ENCODE measurements at regions of chr11 and their contacts with region 1.

Region 1: GRCh38 chr11:113289431-113290187 is 24.8 kb upstream of the TTC12 start:
- DNase-seq: peak; percentile 83
- ATAC-seq: peak; percentile 98
- H3K4me3 Mint-ChIP-seq: no peak overlapping the region
- H3K27ac Mint-ChIP-seq: no peak overlapping the region
- H3K4me1 Mint-ChIP-seq: no peaks in the 10 kb centered on the region
- H3K27me3 Mint-ChIP-seq: peaks cover 7% of the 10 kb centered on the region

Region 2: DNA sequence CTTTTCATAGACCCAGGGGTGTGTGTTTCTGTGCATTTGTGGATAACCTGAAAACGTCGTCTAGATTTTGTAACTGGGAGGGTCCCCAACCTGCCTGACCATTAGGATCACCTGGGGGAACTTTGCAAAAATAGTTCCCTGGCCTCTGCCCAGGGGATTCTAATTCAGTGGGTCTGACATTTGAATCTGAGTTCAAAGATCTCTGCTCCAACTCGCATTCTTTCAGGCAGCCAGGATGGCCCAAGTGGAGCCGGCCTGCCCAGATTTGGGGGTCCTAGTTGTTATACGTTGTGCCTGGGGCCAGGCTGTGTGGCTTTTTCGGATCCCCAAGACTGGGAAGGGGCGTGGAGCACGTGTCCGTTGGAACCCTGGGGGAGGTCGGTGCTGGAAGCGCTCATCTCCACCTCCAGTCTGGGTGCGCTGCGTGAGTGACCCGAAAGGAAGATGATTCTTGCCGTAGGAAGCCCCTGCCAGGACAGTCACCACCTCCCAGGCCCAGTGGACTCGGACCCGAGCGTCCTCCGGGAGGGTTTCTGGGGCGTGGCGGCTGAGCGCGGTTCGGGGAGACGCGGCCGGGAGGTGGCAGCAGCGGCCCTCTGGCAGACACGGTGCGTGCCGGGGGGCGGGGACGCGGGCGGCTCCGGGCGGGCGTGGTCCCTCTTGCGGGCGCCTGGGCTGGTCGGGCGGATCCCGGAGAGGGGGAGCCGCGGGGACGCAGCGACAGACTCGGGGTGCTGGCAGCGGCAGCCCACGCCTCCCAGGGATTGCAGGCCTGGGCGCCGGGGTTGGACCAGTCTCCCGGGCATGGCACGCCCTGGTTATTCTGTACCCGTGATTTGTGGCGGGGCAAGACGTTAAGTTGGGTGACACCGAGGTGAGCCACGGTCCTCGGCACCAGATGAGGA is 999.8 kb before region 1 on chr11:
- CTCF ChIA-PET with region 1: interaction called, 3 read pairs
- POLR2A ChIA-PET with region 1: no interaction called
- intact Hi-C with region 1: loop called in 1 of 2 experiments (anchors 1 kb)
- DNase-seq: peak; percentile 91
- ATAC-seq: peak; percentile 92
- H3K4me3 Mint-ChIP-seq: peak overlapping the region; percentile 69
- H3K27ac Mint-ChIP-seq: peak overlapping the region; percentile 82
- H3K4me1 Mint-ChIP-seq: peaks cover 29% of the 10 kb centered on the region
- H3K27me3 Mint-ChIP-seq: no peaks in the 10 kb centered on the region

Region 3: DNA sequence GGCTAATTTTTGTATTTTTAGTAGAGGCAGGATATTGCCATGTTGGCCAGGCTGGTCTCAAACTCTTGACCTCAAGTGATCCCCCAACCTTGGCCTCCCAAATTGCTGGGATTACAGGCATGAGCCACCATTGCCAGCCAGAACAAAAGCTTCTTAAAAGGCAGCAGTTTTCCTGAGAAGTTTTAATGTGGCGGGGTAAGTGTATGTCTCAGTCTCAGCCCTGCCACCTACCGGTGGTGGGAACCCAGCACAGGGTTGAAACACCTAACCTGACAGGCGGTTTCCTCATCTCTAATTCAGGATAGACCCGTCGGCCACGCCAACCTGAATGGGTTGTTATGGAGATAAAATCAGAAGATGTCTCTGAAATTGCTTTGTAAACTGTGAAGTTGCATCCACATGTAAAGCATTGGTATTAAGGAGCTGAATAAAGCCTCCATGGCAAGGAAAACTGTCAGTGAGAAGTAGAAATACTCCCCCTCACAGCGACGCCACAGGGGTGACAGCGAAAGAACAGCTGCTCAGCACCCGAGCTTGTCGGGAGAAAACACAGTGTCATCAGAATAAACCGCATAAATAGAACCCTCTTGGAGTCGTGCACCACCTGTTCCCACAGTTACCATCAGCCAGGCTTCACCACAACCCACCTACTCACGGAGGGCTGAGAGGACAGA is 494.3 kb before region 1 on chr11:
- CTCF ChIA-PET with region 1: no interaction called
- POLR2A ChIA-PET with region 1: no interaction called
- intact Hi-C with region 1: loop called (anchors 1 to 5 kb)
- DNase-seq: peak; percentile 64
- ATAC-seq: peak; percentile 72
- H3K4me3 Mint-ChIP-seq: no peak overlapping the region
- H3K27ac Mint-ChIP-seq: no peak overlapping the region
- H3K4me1 Mint-ChIP-seq: peaks cover 2% of the 10 kb centered on the region
- H3K27me3 Mint-ChIP-seq: no peaks in the 10 kb centered on the region

Region 4: DNA sequence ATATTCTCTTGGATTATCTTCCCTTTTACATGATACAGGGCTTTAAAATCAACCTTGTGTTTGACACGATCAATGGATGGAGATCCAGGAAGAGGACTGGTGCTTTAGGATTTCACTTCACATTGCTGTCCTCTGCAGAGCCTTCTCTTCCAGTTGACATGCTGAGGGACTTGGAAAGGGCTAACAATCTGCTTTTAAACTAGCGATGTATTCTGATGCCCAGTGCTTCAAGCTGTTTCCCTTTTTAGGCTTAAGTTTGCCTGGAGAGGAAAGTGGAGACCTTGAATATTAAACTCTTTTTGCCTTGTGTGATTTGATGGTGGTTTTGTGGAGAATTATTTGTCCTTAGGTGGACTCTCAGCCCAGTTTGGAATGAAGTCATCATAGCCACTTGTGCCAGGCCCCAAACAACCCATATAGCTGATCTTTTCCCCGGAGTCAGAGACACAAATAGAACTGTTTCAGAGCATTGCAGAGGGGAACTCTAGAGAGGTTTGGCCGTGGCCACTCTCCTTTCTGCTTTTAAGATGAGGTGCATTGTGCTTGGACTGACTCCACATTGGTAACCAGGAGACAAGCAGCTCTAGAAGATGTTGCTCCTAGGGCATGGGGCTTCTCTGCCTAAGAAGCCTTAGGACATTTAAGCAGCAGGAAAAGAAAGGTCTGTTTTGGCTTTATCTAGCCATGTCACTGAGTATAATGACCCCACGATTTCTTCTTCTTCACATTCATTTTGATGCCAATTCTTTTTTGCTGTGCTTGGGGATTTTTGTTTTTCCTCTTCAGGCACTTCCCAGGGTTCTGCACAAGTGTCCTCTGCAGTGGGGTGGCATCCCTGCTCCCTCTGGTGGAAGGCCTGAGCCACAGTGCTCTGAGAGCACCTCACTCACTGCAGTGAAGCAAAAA is 175.6 kb before region 1 on chr11:
- CTCF ChIA-PET with region 1: interaction called, 4 read pairs
- POLR2A ChIA-PET with region 1: no interaction called
- intact Hi-C with region 1: loop called in 1 of 2 experiments (anchors 10 kb)
- DNase-seq: peak; percentile 38
- ATAC-seq: no peak
- H3K4me3 Mint-ChIP-seq: no peak overlapping the region
- H3K27ac Mint-ChIP-seq: no peak overlapping the region
- H3K4me1 Mint-ChIP-seq: no peaks in the 10 kb centered on the region
- H3K27me3 Mint-ChIP-seq: peaks cover 15% of the 10 kb centered on the region

Region 5: DNA sequence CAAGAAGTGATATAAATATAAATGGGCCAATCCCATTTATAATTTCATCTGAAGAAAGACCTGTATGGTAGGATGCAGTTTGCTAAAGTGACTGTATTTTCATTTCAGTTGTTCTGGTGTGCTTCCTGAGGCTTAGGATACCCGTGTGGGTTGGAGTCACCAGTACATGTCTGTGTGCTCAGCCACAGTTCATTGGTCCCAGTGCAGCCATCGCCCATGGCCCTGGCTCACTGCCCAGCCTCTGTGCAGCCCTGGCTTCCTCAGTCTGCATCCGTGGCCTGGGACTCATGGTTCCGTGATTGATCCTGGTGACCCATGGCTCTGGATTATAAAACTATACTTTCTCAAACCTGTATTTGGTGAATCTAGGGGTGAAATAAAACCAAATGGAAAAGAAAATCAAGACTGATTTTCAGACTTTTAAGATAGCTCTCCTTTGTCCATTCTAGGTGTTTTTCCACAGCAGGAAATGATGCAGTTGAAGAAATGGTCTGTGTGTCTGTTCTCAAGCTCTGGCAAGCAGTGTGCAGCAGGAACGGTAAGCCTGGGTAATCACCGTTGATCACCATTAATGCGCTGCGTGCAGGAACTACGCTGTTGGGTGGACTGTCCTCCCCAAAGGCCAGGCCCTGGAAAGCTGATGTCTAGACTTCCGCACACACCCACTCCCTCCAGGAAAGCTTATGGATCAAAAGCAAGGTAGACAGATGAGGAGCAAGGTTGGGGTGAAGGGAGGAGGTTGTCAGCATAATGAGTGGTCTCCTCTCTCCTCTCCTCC is 52.0 kb after region 1 on chr11:
- CTCF ChIA-PET with region 1: no interaction called
- POLR2A ChIA-PET with region 1: no interaction called
- intact Hi-C with region 1: no loop called
- DNase-seq: no peak
- ATAC-seq: no peak
- H3K4me3 Mint-ChIP-seq: no peak overlapping the region
- H3K27ac Mint-ChIP-seq: no peak overlapping the region
- H3K4me1 Mint-ChIP-seq: no peaks in the 10 kb centered on the region
- H3K27me3 Mint-ChIP-seq: no peaks in the 10 kb centered on the region

Measured in activated CD4-positive, alpha-beta T cell treated with anti-CD3 and anti-CD28 coated beads for 36 hours (primary cell).